Colonic mucosa (tissue), 4 donors: ENCODE measurements at regions of chr9 and their contacts with region 1.

Region 1: DNA sequence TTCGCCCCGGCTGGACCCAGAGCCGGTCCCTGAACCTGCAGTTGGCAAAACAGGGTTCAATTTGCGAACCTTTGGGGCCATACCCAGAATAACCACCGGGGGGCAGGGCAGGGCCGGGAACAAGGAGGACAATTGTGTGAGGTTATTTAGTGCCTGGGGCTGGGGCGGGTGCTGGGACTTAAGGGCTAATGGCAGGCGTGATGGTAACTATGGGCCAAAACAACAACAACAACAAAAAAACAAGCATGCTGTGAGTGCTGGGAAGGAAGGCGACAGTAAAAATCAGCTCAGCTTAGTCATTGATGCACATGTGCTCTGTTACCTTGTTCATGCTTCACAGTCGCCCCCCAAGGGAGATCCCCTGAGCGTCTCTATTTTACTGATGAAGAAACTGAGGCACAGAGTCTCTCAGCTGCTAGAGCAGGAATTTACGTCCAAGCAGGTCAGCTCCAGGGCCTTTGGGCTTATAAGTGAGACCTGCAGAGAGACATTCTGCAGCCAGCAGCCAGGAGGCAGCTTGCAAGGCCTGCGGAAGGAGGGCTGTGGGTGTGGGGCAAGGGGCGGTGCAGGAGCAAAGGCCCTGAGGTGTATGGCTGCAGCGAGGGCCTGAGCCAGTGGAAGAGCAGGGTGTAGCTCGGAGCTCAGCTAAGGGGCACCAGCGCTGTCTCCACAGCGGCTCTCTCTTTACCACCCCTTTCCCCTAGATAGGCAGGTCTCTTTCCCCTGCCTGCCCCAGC is 106.0 kb downstream of the PHF2 start:
- DNase-seq: peak; percentile 73
- H3K4me3 ChIP-seq: no peak overlapping the region
- H3K27ac ChIP-seq: no peak overlapping the region
- H3K4me1 ChIP-seq: no peaks in the 10 kb centered on the region
- H3K27me3 ChIP-seq: no peaks in the 10 kb centered on the region
- CTCF ChIP-seq: peak; percentile 78

Region 2: GRCh38 chr9:93962561-93963440 is 280.4 kb after region 1 on chr9:
- intact Hi-C with region 1: loop called (anchors 2 kb)
- DNase-seq: peak; percentile 88
- H3K4me3 ChIP-seq: no peak overlapping the region
- H3K27ac ChIP-seq: no peak overlapping the region
- H3K4me1 ChIP-seq: peaks cover 22% of the 10 kb centered on the region
- H3K27me3 ChIP-seq: peaks cover 40% of the 10 kb centered on the region
- CTCF ChIP-seq: peak; percentile 68

Region 3: GRCh38 chr9:94002316-94003140 is 320.1 kb after region 1 on chr9:
- intact Hi-C with region 1: loop called (anchors 2 kb)
- DNase-seq: peak; percentile 29
- H3K4me3 ChIP-seq: no peak overlapping the region
- H3K27ac ChIP-seq: no peak overlapping the region
- H3K4me1 ChIP-seq: no peaks in the 10 kb centered on the region
- H3K27me3 ChIP-seq: no peaks in the 10 kb centered on the region
- CTCF ChIP-seq: peak; percentile 28

Region 4: GRCh38 chr9:94127806-94128205 is 445.4 kb after region 1 on chr9:
- intact Hi-C with region 1: no loop called
- DNase-seq: no peak
- H3K4me3 ChIP-seq: no peak overlapping the region
- H3K27ac ChIP-seq: no peak overlapping the region
- H3K4me1 ChIP-seq: no peaks in the 10 kb centered on the region
- H3K27me3 ChIP-seq: no peaks in the 10 kb centered on the region
- CTCF ChIP-seq: no peak

Region 5: DNA sequence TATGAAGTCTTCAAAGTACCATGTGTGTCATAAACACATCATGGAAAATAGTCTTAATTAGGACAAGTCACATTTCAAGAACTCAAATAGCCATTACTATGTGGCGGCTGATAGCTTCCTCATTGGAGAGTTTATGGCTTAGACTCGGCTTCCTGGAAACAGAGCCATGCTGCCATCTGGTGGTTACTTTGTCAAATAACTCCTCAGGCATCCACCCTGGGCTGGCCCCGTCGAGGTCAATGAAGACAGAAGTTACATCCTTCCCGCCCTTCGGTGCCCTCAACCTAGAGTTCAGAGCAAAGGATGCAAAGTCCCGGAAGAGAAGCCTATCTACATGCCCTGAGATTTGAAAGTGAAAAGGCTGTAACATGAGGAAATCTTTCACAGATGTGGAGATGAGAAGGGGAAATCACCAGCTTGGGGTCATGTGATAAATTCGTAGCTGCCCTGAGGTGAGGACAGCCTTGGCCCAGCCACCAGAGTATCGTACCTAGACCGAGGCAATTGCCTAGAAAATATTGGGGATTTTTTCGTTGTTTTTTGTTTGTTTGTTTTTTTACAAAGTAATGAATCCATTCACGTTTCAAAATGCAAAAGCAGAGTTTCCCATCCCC is 531.2 kb after region 1 on chr9:
- intact Hi-C with region 1: loop called (anchors 10 kb)
- DNase-seq: peak; percentile 79
- H3K4me3 ChIP-seq: no peak overlapping the region
- H3K27ac ChIP-seq: no peak overlapping the region
- H3K4me1 ChIP-seq: no peaks in the 10 kb centered on the region
- H3K27me3 ChIP-seq: no peaks in the 10 kb centered on the region
- CTCF ChIP-seq: peak; percentile 77